CD8-positive, alpha-beta memory T cell (primary cell): ENCODE measurements at regions of chr19 and their contacts with region 1.

Region 1: DNA sequence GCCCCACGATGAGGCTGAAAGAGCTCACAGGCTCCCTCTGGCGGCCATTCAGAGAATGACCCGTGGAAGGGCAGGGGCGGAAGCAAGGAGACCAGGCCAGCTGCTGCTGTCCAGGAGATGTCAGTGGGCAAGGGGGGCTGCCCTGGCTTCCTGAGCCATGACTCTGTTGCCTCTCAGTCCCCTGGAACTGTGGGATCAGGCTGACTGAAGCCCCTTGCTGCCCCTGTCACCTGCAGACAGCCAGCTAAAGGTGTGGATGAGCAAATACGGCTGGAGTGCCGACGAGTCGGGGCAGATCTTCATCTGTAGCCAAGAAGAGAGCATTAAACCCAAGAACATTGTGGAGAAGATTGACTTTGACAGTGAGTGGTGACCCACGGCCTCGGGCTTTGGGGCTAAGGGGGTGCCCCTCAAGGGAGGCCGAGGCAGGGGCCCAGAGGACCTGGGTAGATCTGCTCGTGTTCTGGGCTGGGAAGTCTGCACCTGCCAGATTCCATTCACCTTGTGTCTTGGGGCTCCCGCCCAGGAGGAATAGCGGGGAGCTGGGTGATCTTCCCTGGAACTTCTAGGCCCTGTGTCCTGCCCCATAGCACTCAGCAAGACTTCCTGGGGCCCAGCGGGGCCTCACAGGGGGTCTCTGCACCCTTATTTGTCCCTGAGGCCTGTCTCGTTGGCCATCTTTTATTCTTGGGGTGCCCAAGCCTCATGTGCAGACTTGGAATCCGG is 12.5 kb upstream of the ACTN4 start:
- DNase-seq: peak; percentile 62 to 80 (median 62)
- H3K4me3 ChIP-seq: no peak overlapping the region
- H3K4me3 Mint-ChIP-seq: peak overlapping the region in 6 of 7 donors; percentile 15 to 71 (median 58)
- H3K27ac ChIP-seq: no peak overlapping the region
- H3K27ac Mint-ChIP-seq: peak overlapping the region; percentile 2 to 93 (median 88)
- H3K4me1 ChIP-seq: peaks cover 30% of the 10 kb centered on the region
- H3K4me1 Mint-ChIP-seq: peaks cover 31 to 33% (median 33%) of the 10 kb centered on the region in 3 donors
- H3K27me3 ChIP-seq: no peaks in the 10 kb centered on the region
- H3K27me3 Mint-ChIP-seq: no peaks in the 10 kb centered on the region

Region 2: GRCh38 chr19:38402967-38403861 is 231.7 kb before region 1 on chr19 and contains the start of gene FAM98C:
- CTCF ChIA-PET with region 1: interaction called, 23 read pairs
- POLR2A ChIA-PET with region 1: no interaction called
- DNase-seq: peak; percentile 96 to 99 (median 98)
- H3K4me3 ChIP-seq: peak within 1 kb of the TSS; percentile 83
- H3K4me3 Mint-ChIP-seq: peak within 1 kb of the TSS; percentile 89 to 98 (median 92)
- H3K27ac ChIP-seq: peak within 1 kb of the TSS; percentile 67
- H3K27ac Mint-ChIP-seq: peak within 1 kb of the TSS; percentile 80 to 96 (median 93)
- H3K4me1 ChIP-seq: peaks cover 10% of the 10 kb centered on the region
- H3K4me1 Mint-ChIP-seq: peaks cover 13 to 27% (median 20%) of the 10 kb centered on the region in 3 donors
- H3K27me3 ChIP-seq: no peaks in the 10 kb centered on the region
- H3K27me3 Mint-ChIP-seq: peaks cover 0 to 8% of the 10 kb centered on the region in 2 donors
- total RNA-seq, gene FAM98C: 17.8 to 25.2 TPM

Region 3: DNA sequence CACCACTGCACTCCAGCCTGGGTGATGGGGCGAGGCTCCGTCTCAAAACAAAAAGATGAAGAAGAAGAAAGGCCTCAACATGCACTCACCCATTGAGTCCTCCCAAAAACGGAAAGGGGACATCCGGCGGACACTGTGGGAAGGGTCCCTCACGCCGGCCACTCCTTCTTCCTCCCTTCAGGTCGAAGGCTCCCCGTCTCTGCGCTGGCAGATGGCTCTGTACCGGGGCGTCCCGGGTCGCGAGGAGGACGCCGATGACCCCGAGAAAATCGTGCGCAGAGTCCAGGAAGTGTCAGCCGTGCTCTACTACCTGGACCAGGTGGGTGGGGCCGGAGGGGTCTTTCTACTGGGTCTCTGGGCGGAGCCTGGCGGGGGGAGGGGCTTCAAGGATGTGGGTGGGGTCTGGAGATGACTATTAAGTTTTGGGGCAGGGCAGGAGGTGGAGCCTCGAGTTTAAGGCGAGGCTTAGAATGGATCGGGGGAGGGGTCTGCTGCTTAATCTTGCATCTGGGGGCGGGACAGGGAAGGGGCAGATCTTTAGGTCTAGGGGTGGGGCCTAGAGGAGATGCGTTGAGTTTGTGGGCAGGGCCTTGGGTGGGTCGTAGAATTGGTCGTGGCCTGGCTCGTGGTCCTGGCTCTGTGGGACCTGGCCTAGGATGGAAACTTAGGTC is 107.3 kb before region 1 on chr19:
- CTCF ChIA-PET with region 1: no interaction called
- POLR2A ChIA-PET with region 1: no interaction called
- DNase-seq: no peak
- H3K4me3 ChIP-seq: no peak overlapping the region
- H3K4me3 Mint-ChIP-seq: peak overlapping the region in 1 of 7 donors; percentile 55
- H3K27ac ChIP-seq: no peak overlapping the region
- H3K27ac Mint-ChIP-seq: no peak overlapping the region
- H3K4me1 ChIP-seq: no peaks in the 10 kb centered on the region
- H3K4me1 Mint-ChIP-seq: peaks cover 0 to 4% (median 2%) of the 10 kb centered on the region in 3 donors
- H3K27me3 ChIP-seq: no peaks in the 10 kb centered on the region
- H3K27me3 Mint-ChIP-seq: peaks cover 0 to 1% of the 10 kb centered on the region in 2 donors

Region 4: GRCh38 chr19:38544034-38544958 is 90.6 kb before region 1 on chr19:
- CTCF ChIA-PET with region 1: interaction called, 27 read pairs
- POLR2A ChIA-PET with region 1: interaction called, 7 read pairs
- DNase-seq: peak in 2 of 5 donors; percentile 55 to 60
- H3K4me3 ChIP-seq: peak overlapping the region; percentile 7
- H3K4me3 Mint-ChIP-seq: peak overlapping the region in 4 of 7 donors; percentile 12 to 42 (median 20)
- H3K27ac ChIP-seq: peak overlapping the region; percentile 41
- H3K27ac Mint-ChIP-seq: peak overlapping the region in 5 of 8 donors; percentile 2 to 84 (median 14)
- H3K4me1 ChIP-seq: peaks cover 19% of the 10 kb centered on the region
- H3K4me1 Mint-ChIP-seq: peaks cover 22 to 35% (median 34%) of the 10 kb centered on the region in 3 donors
- H3K27me3 ChIP-seq: no peaks in the 10 kb centered on the region
- H3K27me3 Mint-ChIP-seq: peaks cover 0 to 2% of the 10 kb centered on the region in 2 donors

Region 5: GRCh38 chr19:38618590-38619360 is 16.1 kb before region 1 on chr19 and contains the start of gene EIF3K:
- CTCF ChIA-PET with region 1: interaction called, 43 read pairs
- POLR2A ChIA-PET with region 1: no interaction called
- DNase-seq: peak; percentile 96 to 98 (median 96)
- H3K4me3 ChIP-seq: peak within 1 kb of the TSS; percentile 75
- H3K4me3 Mint-ChIP-seq: peak within 1 kb of the TSS; percentile 96 to 100 (median 99)
- H3K27ac ChIP-seq: peak within 1 kb of the TSS; percentile 85
- H3K27ac Mint-ChIP-seq: peak within 1 kb of the TSS; percentile 92 to 100 (median 99)
- H3K4me1 ChIP-seq: peaks cover 46% of the 10 kb centered on the region
- H3K4me1 Mint-ChIP-seq: peaks cover 47 to 63% (median 63%) of the 10 kb centered on the region in 3 donors
- H3K27me3 ChIP-seq: no peaks in the 10 kb centered on the region
- H3K27me3 Mint-ChIP-seq: no peaks in the 10 kb centered on the region
- total RNA-seq, gene EIF3K: 275 to 282 TPM

Region 6: DNA sequence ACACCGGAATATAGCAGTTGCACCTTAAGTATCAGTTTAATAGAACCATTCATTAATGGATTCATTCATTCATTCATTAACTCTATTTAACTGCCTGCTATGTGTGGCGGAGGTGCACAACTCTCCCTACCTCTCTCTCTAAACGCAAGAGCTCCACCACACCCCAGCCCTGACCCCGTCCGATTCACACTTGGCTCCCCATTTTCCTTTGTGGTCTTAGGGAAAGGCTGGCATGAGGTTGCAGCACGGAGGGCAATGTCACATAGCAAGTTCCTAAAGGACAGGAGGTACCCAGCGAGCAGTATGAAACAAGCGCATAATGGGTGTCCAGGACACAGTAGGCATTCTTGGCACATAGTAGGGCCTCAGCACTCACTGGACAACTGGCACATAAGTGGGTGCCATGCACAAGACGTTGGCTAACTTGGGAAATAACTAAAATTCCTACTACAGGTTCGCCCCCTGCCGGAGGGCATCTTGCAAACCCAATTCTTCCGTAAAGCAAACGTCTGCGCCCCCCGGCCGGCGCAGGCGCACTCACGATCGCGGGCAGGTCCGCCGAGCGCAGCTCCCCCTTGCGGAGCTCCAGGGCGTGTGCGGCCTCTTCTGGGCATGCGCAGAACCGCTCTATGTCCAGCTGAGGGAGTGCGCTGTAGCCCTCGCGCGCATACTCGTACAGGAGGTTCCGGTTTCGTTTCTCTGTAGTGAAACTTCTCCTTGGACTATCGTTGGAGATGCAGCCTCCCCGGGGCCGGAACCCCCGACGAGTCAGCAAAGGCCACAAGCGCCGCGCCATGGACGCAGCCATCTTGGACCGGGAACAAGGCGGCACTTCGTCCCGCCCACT is 295.2 kb after region 1 on chr19 and contains the start of gene SARS2:
- CTCF ChIA-PET with region 1: interaction called, 13 read pairs
- POLR2A ChIA-PET with region 1: interaction called, 3 read pairs
- DNase-seq: peak; percentile 88 to 97 (median 96)
- H3K4me3 ChIP-seq: peak within 1 kb of the TSS; percentile 96
- H3K4me3 Mint-ChIP-seq: peak within 1 kb of the TSS; percentile 97 to 100 (median 98)
- H3K27ac ChIP-seq: peak within 1 kb of the TSS; percentile 95
- H3K27ac Mint-ChIP-seq: peak within 1 kb of the TSS; percentile 90 to 100 (median 99)
- H3K4me1 ChIP-seq: peaks cover 49% of the 10 kb centered on the region
- H3K4me1 Mint-ChIP-seq: peaks cover 45 to 62% (median 47%) of the 10 kb centered on the region in 3 donors
- H3K27me3 ChIP-seq: no peaks in the 10 kb centered on the region
- H3K27me3 Mint-ChIP-seq: no peaks in the 10 kb centered on the region
- total RNA-seq, gene SARS2: 43.1 to 46.7 TPM